ENCODE measurements at regions of chr1 and their contacts with region 1.

Region 1: GRCh38 chr1:206684478-206685333 is at the start of gene MAPKAPK2:
- DNase-seq: peak; percentile 62 to 88 (median 76)
- ATAC-seq: peak; percentile 74
- H3K4me3 ChIP-seq: peak within 1 kb of the TSS; percentile 81 to 85
- H3K4me3 Mint-ChIP-seq: peak within 1 kb of the TSS; percentile 96
- H3K27ac ChIP-seq: peak within 1 kb of the TSS; percentile 76 to 88
- H3K27ac Mint-ChIP-seq: peak within 1 kb of the TSS; percentile 97
- H3K4me1 ChIP-seq: peaks cover 23% of the 10 kb centered on the region
- H3K4me1 Mint-ChIP-seq: peaks cover 39% of the 10 kb centered on the region
- H3K27me3 ChIP-seq: no peaks in the 10 kb centered on the region
- H3K27me3 Mint-ChIP-seq: no peaks in the 10 kb centered on the region
- CTCF ChIP-seq: no peak
- total RNA-seq, gene MAPKAPK2: 218 to 225 TPM

Region 2: GRCh38 chr1:206556750-206557635 is 127.7 kb before region 1 on chr1:
- CTCF ChIA-PET with region 1: no interaction called
- POLR2A ChIA-PET with region 1: no interaction called
- intact Hi-C with region 1: no loop called
- DNase-seq: peak; percentile 72 to 95 (median 92)
- ATAC-seq: peak; percentile 64
- H3K4me3 ChIP-seq: peak overlapping the region; percentile 82 to 94
- H3K4me3 Mint-ChIP-seq: peak overlapping the region; percentile 95
- H3K27ac ChIP-seq: peak overlapping the region; percentile 81
- H3K27ac Mint-ChIP-seq: peak overlapping the region; percentile 95
- H3K4me1 ChIP-seq: peaks cover 69% of the 10 kb centered on the region
- H3K4me1 Mint-ChIP-seq: peaks cover 79% of the 10 kb centered on the region
- H3K27me3 ChIP-seq: no peaks in the 10 kb centered on the region
- H3K27me3 Mint-ChIP-seq: no peaks in the 10 kb centered on the region
- CTCF ChIP-seq: no peak

Region 3: DNA sequence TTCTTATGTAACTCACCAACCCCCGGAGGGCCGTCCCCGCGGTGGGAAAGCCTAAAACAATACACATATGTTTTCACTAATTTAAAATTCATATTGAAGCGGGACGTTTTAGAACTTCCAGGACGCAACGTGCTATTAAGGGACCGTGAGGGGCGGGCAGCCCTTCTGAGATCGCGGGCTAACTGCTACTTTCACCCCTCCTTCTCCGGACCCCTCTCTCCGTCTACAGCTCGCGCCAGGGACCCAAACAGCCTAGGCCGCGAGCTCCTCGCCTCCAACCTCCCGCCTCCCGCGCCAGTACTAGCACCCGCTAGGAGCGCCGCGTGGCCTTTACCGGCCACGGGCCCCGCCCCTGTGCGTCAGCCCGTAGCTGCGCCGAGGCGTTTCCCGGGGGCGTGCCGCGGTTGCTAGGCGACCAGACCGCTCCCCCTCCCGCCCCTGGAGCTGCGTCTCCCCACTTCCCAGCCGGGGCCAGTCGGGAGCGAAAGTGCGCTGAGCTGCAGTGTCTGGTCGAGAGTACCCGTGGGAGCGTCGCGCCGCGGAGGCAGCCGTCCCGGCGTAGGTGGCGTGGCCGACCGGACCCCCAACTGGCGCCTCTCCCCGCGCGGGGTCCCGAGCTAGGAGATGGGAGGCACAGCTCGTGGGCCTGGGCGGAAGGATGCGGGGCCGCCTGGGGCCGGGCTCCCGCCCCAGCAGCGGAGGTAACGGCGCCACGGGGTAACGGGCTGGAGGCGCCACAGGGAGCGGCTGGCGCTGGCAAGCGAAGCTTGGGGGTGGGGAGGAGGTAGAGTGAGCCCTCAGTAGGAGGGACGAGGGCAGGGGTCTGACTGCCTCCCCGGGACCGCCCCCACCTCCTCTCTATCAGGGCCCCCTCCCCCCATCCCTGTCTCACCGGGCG is 49.4 kb before region 1 on chr1 and contains the start of gene DYRK3:
- CTCF ChIA-PET with region 1: interaction called, 4 read pairs
- POLR2A ChIA-PET with region 1: no interaction called
- intact Hi-C with region 1: loop called in 1 of 2 experiments (anchors 2 kb)
- DNase-seq: peak; percentile 63 to 94 (median 88)
- ATAC-seq: peak; percentile 94
- H3K4me3 ChIP-seq: peak within 1 kb of the TSS; percentile 58 to 79
- H3K4me3 Mint-ChIP-seq: peak within 1 kb of the TSS; percentile 85
- H3K27ac ChIP-seq: peak within 1 kb of the TSS; percentile 9 to 12
- H3K27ac Mint-ChIP-seq: peak within 1 kb of the TSS; percentile 70
- H3K4me1 ChIP-seq: peaks cover 15% of the 10 kb centered on the region
- H3K4me1 Mint-ChIP-seq: peaks cover 16% of the 10 kb centered on the region
- H3K27me3 ChIP-seq: no peaks in the 10 kb centered on the region
- H3K27me3 Mint-ChIP-seq: peaks cover 15% of the 10 kb centered on the region
- CTCF ChIP-seq: no peak
- total RNA-seq, gene DYRK3: 0.94 to 1.4 TPM

Region 4: GRCh38 chr1:206700445-206701036 is 15.8 kb after region 1 on chr1:
- CTCF ChIA-PET with region 1: interaction called, 3 read pairs
- POLR2A ChIA-PET with region 1: interaction called, 3 read pairs
- intact Hi-C with region 1: loop called in 1 of 2 experiments (anchors 2 kb)
- DNase-seq: no peak
- ATAC-seq: no peak
- H3K4me3 ChIP-seq: no peak overlapping the region
- H3K4me3 Mint-ChIP-seq: no peak overlapping the region
- H3K27ac ChIP-seq: peak overlapping the region in 1 of 2 experiments; percentile 4
- H3K27ac Mint-ChIP-seq: peak overlapping the region; percentile 66
- H3K4me1 ChIP-seq: peaks cover 47% of the 10 kb centered on the region
- H3K4me1 Mint-ChIP-seq: peaks cover 91% of the 10 kb centered on the region
- H3K27me3 ChIP-seq: no peaks in the 10 kb centered on the region
- H3K27me3 Mint-ChIP-seq: no peaks in the 10 kb centered on the region
- CTCF ChIP-seq: no peak

Measured in CD8-positive, alpha-beta T cell (primary cell).